ENCODE measurements at regions of chr12 and their contacts with region 1.

Region 1: GRCh38 chr12:28253161-28253641 is 62.9 kb downstream of the CCDC91 start:
- DNase-seq: peak; percentile 66
- H3K4me3 Mint-ChIP-seq: peak overlapping the region; percentile 54
- H3K27ac Mint-ChIP-seq: peak overlapping the region; percentile 86
- H3K4me1 Mint-ChIP-seq: peaks cover 67% of the 10 kb centered on the region
- H3K27me3 Mint-ChIP-seq: no peaks in the 10 kb centered on the region

Region 2: DNA sequence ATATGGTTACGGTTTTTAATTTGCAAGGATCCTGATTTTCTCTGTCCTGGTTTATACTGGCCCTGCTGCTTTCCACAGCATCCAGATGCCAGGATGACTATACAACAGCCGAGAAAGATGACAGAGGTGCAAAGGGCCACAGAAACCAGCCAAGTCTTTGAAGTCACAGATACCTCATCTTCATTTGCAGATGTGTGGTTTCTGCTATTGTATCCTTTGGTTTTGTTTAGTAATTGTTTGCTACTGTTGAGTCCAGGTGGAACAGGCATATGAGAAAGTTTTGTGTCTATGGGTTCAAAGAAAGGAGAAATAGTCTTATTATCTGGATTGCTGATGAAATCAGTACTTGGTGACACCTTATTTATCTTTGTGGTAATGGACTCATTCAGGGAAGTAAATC is 490.4 kb before region 1 on chr12:
- CTCF ChIA-PET with region 1: no interaction called
- POLR2A ChIA-PET with region 1: no interaction called
- intact Hi-C with region 1: no loop called
- DNase-seq: peak; percentile 32
- H3K4me3 Mint-ChIP-seq: no peak overlapping the region
- H3K27ac Mint-ChIP-seq: no peak overlapping the region
- H3K4me1 Mint-ChIP-seq: peaks cover 8% of the 10 kb centered on the region
- H3K27me3 Mint-ChIP-seq: no peaks in the 10 kb centered on the region

Region 3: GRCh38 chr12:27807063-27807703 is 446.0 kb before region 1 on chr12:
- CTCF ChIA-PET with region 1: no interaction called
- POLR2A ChIA-PET with region 1: no interaction called
- intact Hi-C with region 1: loop called (anchors 1 kb)
- DNase-seq: peak; percentile 56
- H3K4me3 Mint-ChIP-seq: peak overlapping the region; percentile 27
- H3K27ac Mint-ChIP-seq: no peak overlapping the region
- H3K4me1 Mint-ChIP-seq: peaks cover 28% of the 10 kb centered on the region
- H3K27me3 Mint-ChIP-seq: peaks cover 22% of the 10 kb centered on the region

Region 4: GRCh38 chr12:28172434-28173030 is 80.7 kb before region 1 on chr12:
- CTCF ChIA-PET with region 1: interaction called, 3 read pairs
- POLR2A ChIA-PET with region 1: no interaction called
- intact Hi-C with region 1: loop called (anchors 1 kb)
- DNase-seq: no peak
- H3K4me3 Mint-ChIP-seq: no peak overlapping the region
- H3K27ac Mint-ChIP-seq: no peak overlapping the region
- H3K4me1 Mint-ChIP-seq: peaks cover 6% of the 10 kb centered on the region
- H3K27me3 Mint-ChIP-seq: no peaks in the 10 kb centered on the region

Region 5: GRCh38 chr12:28209782-28210181 is 43.4 kb before region 1 on chr12:
- CTCF ChIA-PET with region 1: no interaction called
- POLR2A ChIA-PET with region 1: no interaction called
- intact Hi-C with region 1: no loop called
- DNase-seq: no peak
- H3K4me3 Mint-ChIP-seq: no peak overlapping the region
- H3K27ac Mint-ChIP-seq: no peak overlapping the region
- H3K4me1 Mint-ChIP-seq: peaks cover 10% of the 10 kb centered on the region
- H3K27me3 Mint-ChIP-seq: no peaks in the 10 kb centered on the region

Region 6: DNA sequence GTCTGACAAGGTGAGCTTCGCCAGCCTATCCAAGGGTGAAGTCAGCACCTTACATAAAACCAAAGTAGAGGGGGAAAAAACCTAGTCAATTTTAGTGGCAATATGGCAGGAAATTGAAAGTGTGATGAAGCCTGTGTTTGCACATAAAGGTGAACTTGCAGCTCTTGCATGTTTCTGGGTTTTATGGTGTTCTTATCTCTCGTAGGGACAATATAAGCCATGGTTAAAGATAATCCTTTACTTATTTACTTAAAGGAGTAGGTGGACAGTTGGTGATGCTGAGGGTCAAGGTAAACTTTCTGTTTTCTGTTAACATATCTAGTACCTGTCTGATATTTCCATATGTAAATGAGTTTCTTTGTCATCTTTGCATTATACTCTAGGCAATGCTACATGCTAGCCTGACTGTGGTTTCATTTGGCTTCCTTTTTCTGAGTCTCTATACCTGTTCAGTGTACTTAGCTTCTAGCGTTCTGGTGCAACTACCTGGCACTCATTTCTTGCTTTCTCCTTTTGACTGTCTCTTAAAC is 30.1 kb before region 1 on chr12:
- CTCF ChIA-PET with region 1: interaction called, 5 read pairs
- POLR2A ChIA-PET with region 1: interaction called, 25 read pairs
- intact Hi-C with region 1: loop called (anchors 1 kb)
- DNase-seq: peak; percentile 16
- H3K4me3 Mint-ChIP-seq: peak overlapping the region; percentile 42
- H3K27ac Mint-ChIP-seq: peak overlapping the region; percentile 76
- H3K4me1 Mint-ChIP-seq: peaks cover 45% of the 10 kb centered on the region
- H3K27me3 Mint-ChIP-seq: no peaks in the 10 kb centered on the region

Region 7: GRCh38 chr12:28269851-28270250 is 16.6 kb after region 1 on chr12:
- CTCF ChIA-PET with region 1: no interaction called
- POLR2A ChIA-PET with region 1: no interaction called
- intact Hi-C with region 1: no loop called
- DNase-seq: no peak
- H3K4me3 Mint-ChIP-seq: no peak overlapping the region
- H3K27ac Mint-ChIP-seq: no peak overlapping the region
- H3K4me1 Mint-ChIP-seq: no peaks in the 10 kb centered on the region
- H3K27me3 Mint-ChIP-seq: no peaks in the 10 kb centered on the region

Region 8: DNA sequence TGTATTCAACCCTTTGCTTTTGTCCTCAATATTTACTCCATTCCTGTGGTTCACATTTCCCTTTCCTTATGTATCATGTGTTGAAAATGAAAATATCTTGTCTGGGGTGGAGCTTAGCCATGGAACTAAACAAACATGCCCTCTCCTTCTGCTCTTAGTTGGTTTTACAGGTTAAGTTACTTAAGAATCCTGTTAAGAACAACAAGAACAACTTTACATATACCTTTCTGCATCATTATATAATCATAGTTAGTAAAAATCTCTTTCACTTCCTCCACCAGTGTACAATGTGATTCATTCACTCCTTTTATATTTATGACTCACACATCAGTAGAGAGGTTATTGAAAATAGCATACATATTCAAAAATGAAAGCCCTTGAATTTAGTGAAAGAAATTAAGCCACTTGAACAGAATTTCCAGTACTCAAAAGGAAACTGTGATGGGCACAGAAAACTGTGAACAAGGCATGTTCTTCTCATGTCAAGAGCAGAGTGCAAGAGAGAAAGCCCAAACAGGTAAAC is 244.7 kb after region 1 on chr12:
- CTCF ChIA-PET with region 1: no interaction called
- POLR2A ChIA-PET with region 1: no interaction called
- intact Hi-C with region 1: loop called (anchors 1 kb)
- DNase-seq: no peak
- H3K4me3 Mint-ChIP-seq: no peak overlapping the region
- H3K27ac Mint-ChIP-seq: no peak overlapping the region
- H3K4me1 Mint-ChIP-seq: peaks cover 14% of the 10 kb centered on the region
- H3K27me3 Mint-ChIP-seq: no peaks in the 10 kb centered on the region

Region 9: GRCh38 chr12:28855761-28856310 is 602.6 kb after region 1 on chr12:
- CTCF ChIA-PET with region 1: no interaction called
- POLR2A ChIA-PET with region 1: no interaction called
- intact Hi-C with region 1: no loop called
- DNase-seq: no peak
- H3K4me3 Mint-ChIP-seq: no peak overlapping the region
- H3K27ac Mint-ChIP-seq: no peak overlapping the region
- H3K4me1 Mint-ChIP-seq: no peaks in the 10 kb centered on the region
- H3K27me3 Mint-ChIP-seq: no peaks in the 10 kb centered on the region

Region 10: DNA sequence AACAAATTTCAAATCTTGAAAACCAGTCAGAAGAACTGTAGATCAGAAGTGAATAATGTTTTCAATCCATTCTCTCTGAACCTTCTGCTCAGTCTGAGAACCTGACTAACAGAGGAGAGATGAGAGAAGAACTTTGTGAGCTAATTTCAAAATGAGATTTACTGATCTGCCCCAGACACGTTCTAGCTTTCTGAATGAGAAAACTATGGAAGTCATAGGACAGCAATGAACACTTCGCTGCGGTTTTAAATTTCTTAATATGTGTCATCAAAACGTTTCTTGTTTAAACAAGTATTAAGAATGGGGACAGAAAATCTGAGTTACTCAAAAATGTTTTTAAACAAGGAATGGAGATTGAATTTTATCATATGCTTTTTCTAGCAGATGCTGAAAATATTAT is 829.3 kb after region 1 on chr12:
- CTCF ChIA-PET with region 1: no interaction called
- POLR2A ChIA-PET with region 1: no interaction called
- intact Hi-C with region 1: loop called (anchors 1 kb)
- DNase-seq: no peak
- H3K4me3 Mint-ChIP-seq: no peak overlapping the region
- H3K27ac Mint-ChIP-seq: peak overlapping the region; percentile 40
- H3K4me1 Mint-ChIP-seq: peaks cover 16% of the 10 kb centered on the region
- H3K27me3 Mint-ChIP-seq: peaks cover 25% of the 10 kb centered on the region